ENCODE measurements at regions of chr14 and their contacts with region 1.

Region 1: DNA sequence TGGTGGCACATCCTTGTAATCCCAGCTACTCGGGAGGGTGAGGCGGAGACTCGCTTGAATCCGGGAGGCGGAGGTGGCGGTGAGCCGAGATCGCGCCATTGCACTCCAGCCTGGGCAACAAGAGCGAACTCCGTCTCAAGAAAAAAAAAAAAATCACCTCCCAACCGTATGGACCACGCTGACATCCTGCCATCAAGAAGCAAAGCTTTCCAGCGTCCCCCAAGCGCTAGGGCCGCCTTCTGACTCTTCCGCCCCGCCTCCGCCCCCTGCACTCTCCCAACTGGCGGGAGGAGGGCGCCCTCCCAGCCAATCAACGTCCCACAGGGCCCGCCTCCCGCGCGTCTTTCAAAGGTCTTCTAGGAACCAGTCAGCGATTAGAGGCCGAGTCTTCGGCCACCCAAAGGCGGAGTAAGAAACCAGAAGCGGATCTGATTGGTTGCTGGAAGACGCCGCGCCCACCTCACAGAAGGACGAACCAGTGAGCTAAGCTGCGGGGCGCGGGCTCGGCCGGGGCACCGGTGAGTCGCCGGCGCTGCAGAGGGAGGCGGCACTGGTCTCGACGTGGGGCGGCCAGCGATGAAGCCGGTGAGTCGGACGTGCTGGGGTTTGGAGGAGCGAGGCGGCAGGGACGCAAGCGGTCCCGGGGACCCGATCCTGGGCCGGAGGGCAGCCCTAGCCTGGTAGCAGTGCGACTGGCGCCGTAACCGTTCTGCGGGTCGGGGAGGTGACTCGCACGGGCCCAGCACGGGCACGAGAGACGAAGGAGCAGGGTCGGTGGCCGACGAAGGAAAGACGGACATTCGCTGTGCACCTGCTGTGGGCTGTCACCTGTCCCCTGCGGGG is at the start of gene CDKN3:
- DNase-seq: peak; percentile 94
- ATAC-seq: peak; percentile 94
- H3K4me3 Mint-ChIP-seq: peak within 1 kb of the TSS; percentile 86
- H3K27ac Mint-ChIP-seq: peak within 1 kb of the TSS; percentile 82
- H3K4me1 Mint-ChIP-seq: peaks cover 23% of the 10 kb centered on the region
- H3K27me3 Mint-ChIP-seq: no peaks in the 10 kb centered on the region
- CTCF ChIP-seq: no peak
- total RNA-seq, gene CDKN3: 0.91 and 1.6 TPM in 2 replicates

Region 2: DNA sequence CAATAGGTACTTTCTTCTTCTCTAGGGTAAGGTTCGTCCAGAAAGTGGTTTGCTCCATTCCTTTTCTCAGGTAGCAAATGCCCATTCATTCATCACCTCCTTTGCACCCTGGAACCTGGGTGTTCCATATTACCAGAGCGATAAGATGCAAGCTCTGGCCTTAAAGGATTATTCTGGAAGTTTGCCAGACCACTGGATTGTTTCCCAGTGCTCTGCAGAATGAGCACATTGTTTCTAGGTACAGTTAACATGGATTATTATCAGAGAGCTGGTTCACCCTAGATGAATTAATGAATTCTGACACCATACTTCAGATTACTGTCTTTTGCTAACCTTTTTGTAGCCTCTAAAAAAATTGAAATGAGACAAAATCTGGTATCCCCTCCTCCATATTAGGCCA is 269.2 kb before region 1 on chr14:
- CTCF ChIA-PET with region 1: no interaction called
- POLR2A ChIA-PET with region 1: no interaction called
- intact Hi-C with region 1: no loop called
- DNase-seq: no peak
- ATAC-seq: no peak
- H3K4me3 Mint-ChIP-seq: no peak overlapping the region
- H3K27ac Mint-ChIP-seq: no peak overlapping the region
- H3K4me1 Mint-ChIP-seq: no peaks in the 10 kb centered on the region
- H3K27me3 Mint-ChIP-seq: no peaks in the 10 kb centered on the region
- CTCF ChIP-seq: no peak

Region 3: GRCh38 chr14:54267172-54267571 is 129.5 kb before region 1 on chr14:
- CTCF ChIA-PET with region 1: no interaction called
- POLR2A ChIA-PET with region 1: no interaction called
- intact Hi-C with region 1: no loop called
- DNase-seq: no peak
- ATAC-seq: peak; percentile 45
- H3K4me3 Mint-ChIP-seq: no peak overlapping the region
- H3K27ac Mint-ChIP-seq: peak overlapping the region; percentile 19
- H3K4me1 Mint-ChIP-seq: peaks cover 19% of the 10 kb centered on the region
- H3K27me3 Mint-ChIP-seq: peaks cover 8% of the 10 kb centered on the region
- CTCF ChIP-seq: no peak

Region 4: DNA sequence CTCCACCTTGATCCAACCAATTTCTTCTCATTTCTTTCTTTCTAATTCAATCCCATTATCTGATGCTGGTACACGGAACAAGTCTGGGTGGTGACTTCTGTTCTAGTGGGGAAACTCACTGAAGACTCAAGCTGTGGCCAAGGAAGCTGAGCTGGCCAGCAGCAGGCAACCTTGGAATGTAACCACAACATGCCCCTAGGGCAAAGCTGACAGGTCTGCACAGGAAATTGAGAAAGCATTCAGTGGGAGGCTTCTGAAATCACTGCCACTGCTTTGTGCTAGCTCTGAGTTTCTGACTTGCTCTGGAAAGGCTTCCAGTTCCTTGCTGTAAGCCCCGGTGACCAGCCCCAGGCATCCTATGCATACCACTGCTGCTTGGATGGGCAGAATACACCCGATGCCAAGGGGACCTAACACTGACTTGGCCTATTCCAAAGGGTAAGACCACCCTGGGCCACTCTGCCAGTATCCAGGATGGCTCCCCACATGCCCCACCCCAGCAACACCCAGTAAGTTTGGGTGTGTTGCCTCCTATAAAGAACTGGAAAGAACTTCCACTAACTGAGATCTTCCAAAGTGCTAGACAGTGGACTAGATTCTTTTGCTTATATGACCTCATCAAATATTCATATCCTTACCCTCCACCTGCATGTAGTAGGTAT is 84.4 kb before region 1 on chr14:
- CTCF ChIA-PET with region 1: no interaction called
- POLR2A ChIA-PET with region 1: no interaction called
- intact Hi-C with region 1: no loop called
- DNase-seq: no peak
- ATAC-seq: no peak
- H3K4me3 Mint-ChIP-seq: no peak overlapping the region
- H3K27ac Mint-ChIP-seq: no peak overlapping the region
- H3K4me1 Mint-ChIP-seq: no peaks in the 10 kb centered on the region
- H3K27me3 Mint-ChIP-seq: peaks cover 6% of the 10 kb centered on the region
- CTCF ChIP-seq: no peak

Region 5: GRCh38 chr14:54370323-54371198 is 26.2 kb before region 1 on chr14:
- CTCF ChIA-PET with region 1: no interaction called
- POLR2A ChIA-PET with region 1: no interaction called
- intact Hi-C with region 1: no loop called
- DNase-seq: no peak
- ATAC-seq: no peak
- H3K4me3 Mint-ChIP-seq: no peak overlapping the region
- H3K27ac Mint-ChIP-seq: no peak overlapping the region
- H3K4me1 Mint-ChIP-seq: no peaks in the 10 kb centered on the region
- H3K27me3 Mint-ChIP-seq: peaks cover 8% of the 10 kb centered on the region
- CTCF ChIP-seq: no peak

Region 6: DNA sequence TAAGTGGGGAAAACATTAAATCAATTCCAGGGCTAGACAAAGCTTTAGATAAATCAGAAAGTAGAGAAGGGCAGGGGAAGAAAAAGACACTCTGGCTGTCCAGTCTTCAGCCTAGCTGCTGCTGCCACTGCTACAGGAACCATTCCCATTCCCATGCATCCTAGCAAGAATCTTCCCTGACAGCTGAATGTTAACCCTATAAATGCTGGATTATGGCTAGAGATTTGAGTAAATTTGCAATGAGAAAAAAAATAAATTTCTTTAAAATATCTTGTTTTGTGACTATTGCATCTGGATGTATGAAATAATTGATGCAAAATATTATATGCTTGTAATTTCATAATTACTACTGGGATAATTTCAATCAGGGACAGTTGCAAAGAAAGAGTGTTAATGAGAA is 14.9 kb before region 1 on chr14:
- CTCF ChIA-PET with region 1: no interaction called
- POLR2A ChIA-PET with region 1: no interaction called
- intact Hi-C with region 1: loop called (anchors 2 kb)
- DNase-seq: no peak
- ATAC-seq: no peak
- H3K4me3 Mint-ChIP-seq: no peak overlapping the region
- H3K27ac Mint-ChIP-seq: no peak overlapping the region
- H3K4me1 Mint-ChIP-seq: peaks cover 25% of the 10 kb centered on the region
- H3K27me3 Mint-ChIP-seq: peaks cover 24% of the 10 kb centered on the region
- CTCF ChIP-seq: no peak

Region 7: GRCh38 chr14:54509546-54510501 is 113.1 kb after region 1 on chr14 and contains the start of gene CGRRF1:
- CTCF ChIA-PET with region 1: no interaction called
- POLR2A ChIA-PET with region 1: no interaction called
- intact Hi-C with region 1: loop called (anchors 1 kb)
- DNase-seq: peak; percentile 98
- ATAC-seq: peak; percentile 98
- H3K4me3 Mint-ChIP-seq: peak within 1 kb of the TSS; percentile 95
- H3K27ac Mint-ChIP-seq: peak within 1 kb of the TSS; percentile 89
- H3K4me1 Mint-ChIP-seq: peaks cover 41% of the 10 kb centered on the region
- H3K27me3 Mint-ChIP-seq: no peaks in the 10 kb centered on the region
- CTCF ChIP-seq: no peak
- total RNA-seq, gene CGRRF1: 11.9 and 14.1 TPM in 2 replicates